HEK293 (cell line): ENCODE measurements at regions of chr4 and their contacts with region 1.

Region 1: GRCh38 chr4:56435306-56435926 is at the start of gene PPAT:
- H3K4me3 ChIP-seq: peak within 1 kb of the TSS; percentile 80
- H3K27ac ChIP-seq: peak within 1 kb of the TSS; percentile 69
- H3K4me1 ChIP-seq: no peaks in the 10 kb centered on the region
- CTCF ChIP-seq: peak; percentile 76; the same call in 1 of the 2 replicates

Region 2: GRCh38 chr4:56387023-56388001 is 48.1 kb before region 1 on chr4 and contains the start of gene AASDH:
- CTCF ChIA-PET with region 1: no interaction called
- POLR2A ChIA-PET with region 1: interaction called, 52 read pairs
- H3K4me3 ChIP-seq: peak within 1 kb of the TSS; percentile 80
- H3K27ac ChIP-seq: peak within 1 kb of the TSS; percentile 74
- H3K4me1 ChIP-seq: no peaks in the 10 kb centered on the region
- CTCF ChIP-seq: no peak

Region 3: DNA sequence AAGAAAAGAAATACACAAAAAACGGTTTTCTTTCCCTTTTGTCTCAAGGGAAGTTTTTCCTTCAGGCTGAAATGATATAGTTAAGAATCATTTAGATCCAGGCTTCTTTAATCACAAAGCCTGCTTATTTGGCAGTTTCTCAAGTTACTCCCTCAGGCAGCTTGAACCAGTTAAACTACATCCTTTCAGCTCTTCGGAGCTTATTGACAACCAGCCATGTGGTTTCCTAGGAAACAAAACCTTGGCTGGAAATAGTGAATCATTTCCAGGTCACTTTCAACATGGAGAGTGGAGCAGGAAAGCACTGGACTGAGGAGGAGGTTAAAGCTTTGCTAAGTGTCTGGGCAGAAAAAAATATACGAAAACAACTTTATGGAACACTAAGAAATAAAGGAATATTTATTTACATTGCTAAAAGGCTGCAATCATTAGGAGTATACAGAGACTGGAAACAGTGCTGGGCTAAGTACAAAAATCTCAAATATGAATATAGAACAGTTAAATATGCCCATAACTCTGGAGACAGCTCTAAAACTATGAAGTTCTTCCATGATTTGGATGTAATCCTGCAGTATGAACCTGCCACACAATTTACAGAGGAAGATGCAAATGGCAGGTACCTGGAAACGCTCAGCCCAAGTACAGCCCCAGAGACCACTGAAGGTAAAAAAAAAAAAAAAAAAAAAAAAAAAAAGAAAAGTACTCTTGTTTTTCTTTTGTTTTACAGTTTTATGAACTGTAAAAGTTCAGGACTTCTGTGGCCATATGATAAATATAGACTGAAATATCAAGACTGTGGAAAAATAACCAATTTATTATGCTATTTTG is 25.0 kb before region 1 on chr4:
- CTCF ChIA-PET with region 1: interaction called, 4 read pairs
- POLR2A ChIA-PET with region 1: interaction called, 13 read pairs
- H3K4me3 ChIP-seq: peak overlapping the region; percentile 20
- H3K27ac ChIP-seq: no peak overlapping the region; the same call in 1 of the 2 replicates
- H3K4me1 ChIP-seq: peaks cover 4% of the 10 kb centered on the region
- CTCF ChIP-seq: no peak

Region 4: GRCh38 chr4:56424697-56425514 is 10.5 kb before region 1 on chr4:
- CTCF ChIA-PET with region 1: interaction called, 19 read pairs
- POLR2A ChIA-PET with region 1: interaction called, 5 read pairs
- H3K4me3 ChIP-seq: no peak overlapping the region
- H3K27ac ChIP-seq: no peak overlapping the region
- H3K4me1 ChIP-seq: 0 out of 2 replicates have a peak, but pooled peaks cover 4% of the 10 kb centered on the region
- CTCF ChIP-seq: no peak

Region 5: GRCh38 chr4:56467284-56468096 is 32.1 kb after region 1 on chr4 and contains the start of gene SRP72:
- CTCF ChIA-PET with region 1: interaction called, 4 read pairs
- POLR2A ChIA-PET with region 1: interaction called, 14 read pairs
- H3K4me3 ChIP-seq: peak within 1 kb of the TSS; percentile 87
- H3K27ac ChIP-seq: peak within 1 kb of the TSS; percentile 68
- H3K4me1 ChIP-seq: no peaks in the 10 kb centered on the region
- CTCF ChIP-seq: no peak

Region 6: GRCh38 chr4:56513517-56513916 is 78.1 kb after region 1 on chr4:
- CTCF ChIA-PET with region 1: no interaction called
- POLR2A ChIA-PET with region 1: no interaction called
- H3K4me3 ChIP-seq: no peak overlapping the region
- H3K27ac ChIP-seq: no peak overlapping the region
- H3K4me1 ChIP-seq: no peaks in the 10 kb centered on the region
- CTCF ChIP-seq: no peak

Region 7: DNA sequence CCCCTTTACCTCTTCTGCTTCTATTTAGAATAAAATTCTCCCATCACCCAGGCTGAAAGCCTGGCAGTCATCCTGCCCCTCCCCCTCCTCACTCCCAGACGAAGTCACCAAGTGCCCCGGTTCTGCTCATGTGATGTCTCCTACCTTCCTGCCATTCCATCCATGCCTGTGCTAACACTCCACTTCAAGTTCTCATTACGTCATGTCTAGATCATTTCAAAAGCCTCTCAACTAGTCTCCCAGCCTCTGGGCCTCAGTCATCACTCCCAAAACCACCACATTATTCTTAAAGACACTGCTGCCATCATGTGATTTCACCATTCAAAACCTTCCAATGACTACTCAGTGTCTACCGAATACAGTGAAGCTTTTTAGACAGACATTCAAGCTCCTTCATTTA is 262.9 kb after region 1 on chr4:
- CTCF ChIA-PET with region 1: no interaction called
- POLR2A ChIA-PET with region 1: no interaction called
- H3K4me3 ChIP-seq: no peak overlapping the region
- H3K27ac ChIP-seq: no peak overlapping the region
- H3K4me1 ChIP-seq: no peaks in the 10 kb centered on the region
- CTCF ChIP-seq: no peak

Region 8: DNA sequence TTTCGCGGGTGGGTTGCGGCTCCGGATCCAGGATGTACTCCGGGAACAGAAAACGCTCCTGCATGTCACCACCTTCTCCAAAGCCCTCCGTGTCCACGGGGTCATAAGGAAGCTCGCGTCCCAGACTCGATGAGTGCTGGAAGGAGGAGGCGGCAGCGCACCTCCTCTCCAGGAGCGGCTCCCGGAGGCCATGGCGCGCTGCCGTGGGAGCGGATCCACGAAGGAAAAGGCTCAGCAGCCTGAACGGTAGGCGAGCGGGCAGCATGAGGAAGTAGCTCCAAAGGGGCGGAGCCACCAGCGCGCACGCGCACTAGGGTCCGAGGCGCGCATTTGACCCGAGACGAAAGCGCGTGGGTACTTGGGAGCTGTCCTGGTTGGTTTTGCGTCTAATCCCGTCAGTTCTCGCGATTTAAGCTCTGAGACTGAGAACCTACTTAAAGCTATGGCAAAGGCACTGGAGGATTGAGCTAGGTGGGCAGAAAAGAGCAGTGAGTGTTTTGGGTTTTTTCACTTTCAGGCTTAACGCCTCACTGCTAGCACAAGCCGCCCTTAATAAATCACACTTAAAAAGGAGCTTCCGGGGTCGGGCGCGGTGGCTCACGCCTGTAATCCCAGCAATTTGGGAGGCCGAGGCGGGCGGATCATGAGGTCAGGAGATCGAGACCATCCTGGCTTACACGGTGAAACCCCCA is 542.1 kb after region 1 on chr4 and contains the start of gene NOA1:
- CTCF ChIA-PET with region 1: no interaction called
- POLR2A ChIA-PET with region 1: interaction called, 16 read pairs
- H3K4me3 ChIP-seq: peak within 1 kb of the TSS; percentile 82
- H3K27ac ChIP-seq: peak within 1 kb of the TSS; percentile 84
- H3K4me1 ChIP-seq: no peaks in the 10 kb centered on the region; the same call in 1 of the 2 replicates
- CTCF ChIP-seq: no peak